Dorsolateral prefrontal cortex (tissue), 120 donors: ENCODE measurements at regions of chr2 and their contacts with region 1.

Region 1: GRCh38 chr2:239157771-239158170 is 243.0 kb downstream of the HDAC4 start:
- DNase-seq: peak in 9 of 10 donors; percentile 11 to 51 (median 29)
- H3K4me3 ChIP-seq: no peak overlapping the region
- H3K27ac ChIP-seq: peak overlapping the region in 16 of 59 donors; percentile 28 to 98 (median 94)
- H3K27me3 ChIP-seq: no peaks in the 10 kb centered on the region
- CTCF ChIP-seq: no peak

Region 2: DNA sequence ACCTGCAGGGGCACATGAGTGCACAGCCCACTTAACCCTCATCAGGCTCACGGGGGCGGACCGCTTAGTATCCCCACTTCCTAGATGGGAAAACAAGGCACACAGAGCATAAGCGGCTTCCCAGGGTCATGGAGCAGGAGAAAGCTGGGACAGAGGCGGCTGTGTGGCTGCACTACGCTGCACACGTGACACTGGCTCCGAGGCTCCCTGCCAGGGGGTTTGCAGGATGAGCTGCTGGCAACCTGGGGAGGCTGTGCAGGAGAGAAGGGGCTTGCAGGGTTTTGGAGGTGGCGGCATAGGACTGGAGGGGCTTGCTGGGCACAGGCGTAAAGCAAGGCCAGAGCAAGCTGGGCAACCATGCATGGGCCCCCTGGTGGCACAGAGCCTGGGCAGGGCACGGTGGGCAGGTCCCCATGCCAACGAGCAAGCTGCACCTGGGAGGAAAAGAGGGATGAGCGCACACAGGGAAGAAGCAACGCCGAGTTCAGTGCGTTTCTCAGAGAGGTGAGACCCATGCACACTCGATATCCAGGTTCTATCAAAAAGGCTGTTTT is 25.5 kb before region 1 on chr2:
- intact Hi-C with region 1: loop called in 1 of 2 experiments (anchors 2 kb)
- DNase-seq: peak in 6 of 10 donors; percentile 29 to 72 (median 58)
- H3K4me3 ChIP-seq: no peak overlapping the region
- H3K27ac ChIP-seq: peak overlapping the region; percentile 72 to 98 (median 91)
- H3K27me3 ChIP-seq: no peaks in the 10 kb centered on the region
- CTCF ChIP-seq: peak in 16 of 56 donors; percentile 5 to 34 (median 17)